GM18951 (cell line): ENCODE measurements at regions of chr6 and their contacts with region 1.

Region 1: GRCh38 chr6:163554663-163555062 is 140.1 kb downstream of the QKI start:
- POLR2A ChIP-seq: no peak

Region 2: DNA sequence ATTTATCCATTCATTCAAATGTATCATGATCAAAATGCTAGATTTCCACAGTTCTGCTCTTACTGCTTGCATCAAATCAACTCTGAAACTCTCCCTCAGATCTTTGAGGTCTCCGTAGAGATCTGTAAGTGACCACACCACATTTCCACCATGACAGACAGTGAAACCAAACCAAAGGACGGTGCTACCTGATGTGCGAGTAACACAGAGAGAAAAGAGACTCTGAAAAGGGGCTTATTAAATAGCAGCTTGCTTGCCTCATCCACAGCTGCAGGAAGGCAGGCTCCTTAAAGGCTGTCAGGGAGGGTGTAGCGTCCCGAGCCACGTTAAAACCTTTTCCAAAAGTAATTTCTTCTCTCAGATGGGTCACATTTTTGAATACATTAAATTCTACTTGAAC is 491.1 kb before region 1 on chr6:
- in situ Hi-C with region 1: no loop called
- POLR2A ChIP-seq: no peak

Region 3: DNA sequence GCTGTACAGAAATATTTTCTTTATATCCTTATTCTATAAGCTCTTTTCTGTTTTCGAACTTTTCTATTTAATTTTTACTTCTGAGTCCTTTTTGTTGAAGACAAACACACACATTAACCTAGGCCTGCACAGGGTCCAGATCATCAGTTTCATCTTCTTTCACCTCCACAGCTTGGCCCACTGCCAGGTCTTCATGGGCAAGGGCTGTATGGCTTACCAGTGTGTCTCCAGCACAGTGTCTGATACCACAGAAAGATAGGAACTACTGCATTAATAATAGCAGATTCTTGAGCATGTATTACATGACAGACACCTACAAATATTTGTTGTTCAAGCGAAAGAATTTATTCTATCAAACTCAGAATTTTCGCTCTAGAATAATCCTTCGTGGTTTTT is 115.7 kb before region 1 on chr6:
- in situ Hi-C with region 1: loop called (anchors 10 kb)
- POLR2A ChIP-seq: no peak

Region 4: DNA sequence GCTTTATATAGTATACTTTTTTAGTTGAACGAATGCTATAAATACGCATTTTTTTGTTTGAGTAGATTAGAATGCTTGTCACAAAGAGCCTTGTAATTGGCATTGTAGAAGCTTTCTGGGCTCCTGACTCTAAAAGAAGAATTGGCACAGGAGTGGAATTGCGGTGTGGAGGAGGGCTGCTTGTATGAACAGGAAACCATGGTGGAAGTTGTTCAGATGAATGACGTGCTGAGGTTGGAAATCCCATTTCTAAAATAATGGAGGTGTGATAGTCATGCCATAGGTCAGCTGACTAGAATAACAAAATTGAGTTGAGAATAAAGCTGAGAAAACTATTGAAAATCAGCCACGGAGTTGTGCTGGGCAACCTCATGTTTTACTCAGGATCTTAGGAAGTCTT is 34.7 kb after region 1 on chr6:
- in situ Hi-C with region 1: no loop called
- POLR2A ChIP-seq: no peak